Caki2 (cell line): ENCODE measurements at regions of chr5 and their contacts with region 1.

Region 1: GRCh38 chr5:10452768-10453331 is 11.2 kb downstream of the ROPN1L start:
- DNase-seq: peak; percentile 74

Region 2: DNA sequence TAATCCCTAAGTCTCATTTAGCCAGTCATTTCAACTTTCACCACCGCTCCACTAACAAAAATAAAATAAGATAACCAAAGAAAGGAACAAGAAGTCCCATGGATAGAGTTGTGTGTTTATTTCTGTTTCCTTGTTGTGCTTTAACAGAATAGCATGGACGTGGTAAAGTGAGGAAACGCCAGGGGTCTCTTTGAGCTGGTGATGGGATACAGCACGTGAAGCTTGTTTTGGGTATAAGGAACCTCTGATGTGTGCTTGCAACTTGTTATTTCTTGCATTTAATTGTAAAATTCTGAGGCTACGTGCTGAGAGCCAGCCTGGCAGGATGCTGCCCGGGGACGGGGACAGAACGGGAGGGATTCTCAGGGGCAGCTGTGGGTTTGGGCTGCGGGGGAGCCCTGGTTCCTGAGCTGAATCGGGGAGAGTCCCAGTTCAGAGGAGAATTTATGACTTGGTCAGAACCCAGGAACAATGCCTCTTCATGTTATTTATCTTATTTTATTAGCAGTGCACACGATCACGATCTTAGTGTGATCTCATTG is 174.4 kb after region 1 on chr5:
- in situ Hi-C with region 1: loop called (anchors 10 kb)
- DNase-seq: no peak